ENCODE measurements at regions of chr14 and their contacts with region 1.

Region 1: DNA sequence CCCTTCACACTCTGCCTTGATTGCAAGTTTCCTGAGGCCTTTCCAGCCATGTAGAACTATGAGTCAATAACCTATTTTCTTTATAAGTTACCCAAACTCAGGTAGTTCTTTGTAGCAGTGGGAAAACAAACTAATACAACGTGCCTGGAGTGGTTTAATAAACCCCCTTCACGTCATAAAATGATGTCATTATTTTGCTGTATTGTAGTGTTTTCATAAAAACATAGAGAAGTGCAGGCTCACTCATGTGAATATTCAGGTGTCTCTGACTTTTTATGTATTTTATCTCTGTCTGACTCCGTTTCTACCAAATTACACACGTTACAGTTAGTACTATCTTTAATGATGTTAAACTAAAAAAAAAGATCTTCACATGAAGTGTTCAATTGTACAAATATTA is 1109.7 kb downstream of the TMEM121 start:
- DNase-seq: no peak
- H3K4me3 Mint-ChIP-seq: no peak overlapping the region
- H3K27ac Mint-ChIP-seq: no peak overlapping the region
- H3K4me1 Mint-ChIP-seq: no peaks in the 10 kb centered on the region
- H3K27me3 Mint-ChIP-seq: no peaks in the 10 kb centered on the region

Region 2: DNA sequence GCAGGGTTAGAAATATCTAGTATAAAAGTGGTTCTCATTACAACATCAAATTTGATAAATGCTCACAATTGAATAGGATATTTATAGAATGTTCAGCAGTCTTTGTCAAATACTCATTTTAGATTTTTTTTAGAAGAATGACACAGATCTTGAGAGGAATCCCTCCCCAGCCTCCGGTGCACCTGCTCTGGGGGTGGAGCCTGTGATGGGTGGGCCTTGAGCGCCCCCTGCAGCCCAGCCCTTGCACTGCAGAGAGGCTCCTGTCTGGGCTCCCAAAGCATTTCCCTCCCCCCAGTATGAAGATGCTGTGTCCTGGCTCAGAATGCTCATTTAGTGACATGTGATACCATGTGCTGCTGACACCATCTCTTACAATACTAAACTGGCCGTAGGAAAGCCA is 317.4 kb before region 1 on chr14:
- CTCF ChIA-PET with region 1: no interaction called
- intact Hi-C with region 1: no loop called
- DNase-seq: peak; percentile 81
- H3K4me3 Mint-ChIP-seq: no peak overlapping the region
- H3K27ac Mint-ChIP-seq: no peak overlapping the region
- H3K4me1 Mint-ChIP-seq: no peaks in the 10 kb centered on the region
- H3K27me3 Mint-ChIP-seq: peaks cover 3% of the 10 kb centered on the region

Region 3: DNA sequence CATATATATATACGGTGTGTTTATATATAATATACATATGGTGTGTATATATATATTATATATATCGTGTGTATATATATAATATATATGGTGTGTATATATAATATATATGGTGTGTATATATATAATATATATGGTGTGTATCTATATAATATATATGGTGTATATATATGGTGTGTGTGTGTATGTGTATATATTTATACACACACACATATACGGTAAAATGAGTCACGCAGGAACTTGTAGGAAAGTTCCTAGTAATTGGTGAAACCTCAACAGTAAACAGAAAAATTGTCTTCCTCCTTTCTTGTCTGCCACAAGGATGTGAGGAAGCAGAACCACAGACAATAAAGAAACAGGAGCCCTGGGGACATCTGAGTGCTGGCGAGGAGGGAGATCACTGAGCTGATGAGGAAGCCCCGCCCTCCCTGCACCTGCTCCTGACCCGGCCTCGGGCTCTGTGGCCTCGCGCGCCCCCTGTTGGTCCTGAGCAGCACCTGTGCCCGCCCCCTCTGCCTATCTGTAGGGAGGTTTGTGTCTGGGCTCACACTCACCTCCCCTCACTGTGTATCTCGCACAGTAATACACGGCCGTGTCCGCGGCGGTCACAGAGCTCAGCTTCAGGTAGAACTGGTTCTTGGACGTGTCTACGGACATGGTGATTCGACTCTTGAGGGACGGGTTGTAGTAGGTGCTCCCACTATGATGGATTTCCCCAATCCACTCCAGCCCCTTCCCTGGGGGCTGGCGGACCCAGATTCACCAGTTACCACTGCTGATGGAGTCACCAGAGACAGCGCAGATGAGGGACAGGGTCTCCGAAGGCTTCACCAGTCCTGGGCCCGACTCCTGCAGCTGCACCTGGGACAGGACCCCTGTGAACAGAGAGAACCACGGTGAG is 30.3 kb before region 1 on chr14:
- CTCF ChIA-PET with region 1: interaction called, 13 read pairs
- intact Hi-C with region 1: no loop called
- DNase-seq: peak; percentile 90
- H3K4me3 Mint-ChIP-seq: no peak overlapping the region
- H3K27ac Mint-ChIP-seq: no peak overlapping the region
- H3K4me1 Mint-ChIP-seq: peaks cover 3% of the 10 kb centered on the region
- H3K27me3 Mint-ChIP-seq: peaks cover 28% of the 10 kb centered on the region

Region 4: DNA sequence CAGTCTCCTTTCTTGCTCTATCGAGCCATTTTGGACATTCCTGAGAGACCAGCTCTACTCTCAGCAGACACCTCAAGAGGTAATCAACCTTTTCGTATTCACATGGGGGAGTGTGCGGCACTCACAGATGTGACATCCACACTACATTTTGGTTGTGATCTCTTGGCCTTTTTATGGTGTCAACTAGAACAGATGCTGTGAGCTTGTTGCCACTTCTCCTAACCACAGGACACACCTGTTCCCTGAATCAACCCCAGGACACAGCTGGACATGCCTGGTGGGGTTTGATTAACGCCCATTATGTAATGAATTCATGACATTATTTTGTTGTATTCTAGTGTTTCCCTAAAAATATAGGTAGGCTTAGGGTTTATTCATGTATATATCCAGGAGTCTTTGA is 33.9 kb after region 1 on chr14:
- CTCF ChIA-PET with region 1: no interaction called
- intact Hi-C with region 1: no loop called
- DNase-seq: no peak
- H3K4me3 Mint-ChIP-seq: no peak overlapping the region
- H3K27ac Mint-ChIP-seq: no peak overlapping the region
- H3K4me1 Mint-ChIP-seq: peaks cover 5% of the 10 kb centered on the region
- H3K27me3 Mint-ChIP-seq: peaks cover 5% of the 10 kb centered on the region